Psoas muscle (tissue), 8 donors: ENCODE measurements at regions of chr14 and their contacts with region 1.

Region 1: GRCh38 chr14:32150392-32150791 is 51.5 kb upstream of the RNU6-7 start:
- DNase-seq: no peak
- ATAC-seq: no peak
- H3K4me3 ChIP-seq: no peak overlapping the region
- H3K27ac ChIP-seq: no peak overlapping the region
- H3K4me1 ChIP-seq: no peaks in the 10 kb centered on the region
- H3K27me3 ChIP-seq: no peaks in the 10 kb centered on the region
- CTCF ChIP-seq: no peak

Region 2: DNA sequence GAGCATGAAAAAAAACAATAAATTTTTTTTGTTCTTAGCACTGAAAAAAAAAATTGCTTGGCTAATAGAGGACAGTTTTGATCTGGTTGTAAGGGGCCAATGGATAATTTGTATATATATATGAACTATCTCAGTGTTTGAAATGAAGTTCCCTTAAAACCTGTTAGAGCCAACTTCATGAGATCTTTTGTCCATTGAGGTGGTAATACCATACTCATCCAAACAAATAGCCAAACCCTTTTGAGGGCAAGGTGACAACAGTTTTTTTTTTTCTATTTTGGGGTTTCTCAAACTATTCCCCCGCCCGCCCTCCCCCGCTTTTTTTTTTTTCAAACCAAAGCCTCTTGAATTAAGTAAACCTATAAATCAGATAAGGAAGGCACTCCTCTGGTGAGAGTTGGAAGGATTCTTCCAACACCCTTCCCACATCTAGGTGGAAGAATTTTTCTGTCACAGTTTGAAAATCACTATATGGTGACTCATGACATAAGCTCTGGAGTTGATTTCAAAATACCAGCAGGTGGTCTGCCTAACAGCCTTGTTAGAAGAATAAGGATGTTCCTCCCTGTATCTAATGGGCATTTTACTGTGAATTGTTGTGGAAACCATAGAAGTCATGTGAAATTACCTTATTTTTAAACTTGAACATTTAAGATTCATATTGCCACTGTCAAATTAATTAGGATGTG is 63.1 kb before region 1 on chr14:
- intact Hi-C with region 1: loop called in 1 of 2 experiments (anchors 10 kb)
- DNase-seq: no peak
- ATAC-seq: peak in 2 of 4 donors; percentile 65 to 69
- H3K4me3 ChIP-seq: no peak overlapping the region
- H3K27ac ChIP-seq: no peak overlapping the region
- H3K4me1 ChIP-seq: peaks cover 28% of the 10 kb centered on the region
- H3K27me3 ChIP-seq: no peaks in the 10 kb centered on the region
- CTCF ChIP-seq: no peak

Region 3: DNA sequence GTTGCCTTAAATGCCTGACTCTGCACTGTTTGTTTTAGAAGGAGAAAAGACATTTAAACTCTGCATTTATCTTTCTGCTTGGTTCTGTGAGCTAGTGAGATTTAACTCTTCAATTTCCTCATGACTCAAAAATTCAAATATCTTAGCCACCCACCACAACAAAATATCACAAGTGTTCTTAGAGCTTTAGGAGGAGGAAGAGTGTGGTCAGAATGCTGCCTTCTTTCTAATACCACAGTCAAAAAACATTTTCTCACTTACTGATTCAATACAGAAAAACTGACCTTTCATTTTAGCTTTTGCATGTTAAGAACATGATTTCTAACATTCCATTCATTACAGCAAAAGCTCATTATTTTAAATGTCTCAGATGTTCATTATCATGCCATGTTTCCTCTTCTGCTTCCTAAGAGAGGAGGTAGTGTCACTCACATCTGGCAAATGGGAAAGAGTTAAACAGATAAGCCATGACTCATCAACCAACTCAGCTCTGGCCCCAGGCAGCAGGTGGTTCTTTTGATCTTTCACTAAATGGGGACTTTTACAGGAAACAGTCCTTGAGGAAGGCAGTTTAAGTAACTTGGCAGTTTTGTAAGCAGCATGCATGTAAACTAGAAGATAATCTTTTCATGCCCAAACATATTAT is 109.1 kb after region 1 on chr14:
- intact Hi-C with region 1: no loop called
- DNase-seq: no peak
- ATAC-seq: peak in 2 of 4 donors; percentile 46 to 64
- H3K4me3 ChIP-seq: no peak overlapping the region
- H3K27ac ChIP-seq: no peak overlapping the region
- H3K4me1 ChIP-seq: peaks cover 9% of the 10 kb centered on the region
- H3K27me3 ChIP-seq: no peaks in the 10 kb centered on the region
- CTCF ChIP-seq: no peak

Region 4: DNA sequence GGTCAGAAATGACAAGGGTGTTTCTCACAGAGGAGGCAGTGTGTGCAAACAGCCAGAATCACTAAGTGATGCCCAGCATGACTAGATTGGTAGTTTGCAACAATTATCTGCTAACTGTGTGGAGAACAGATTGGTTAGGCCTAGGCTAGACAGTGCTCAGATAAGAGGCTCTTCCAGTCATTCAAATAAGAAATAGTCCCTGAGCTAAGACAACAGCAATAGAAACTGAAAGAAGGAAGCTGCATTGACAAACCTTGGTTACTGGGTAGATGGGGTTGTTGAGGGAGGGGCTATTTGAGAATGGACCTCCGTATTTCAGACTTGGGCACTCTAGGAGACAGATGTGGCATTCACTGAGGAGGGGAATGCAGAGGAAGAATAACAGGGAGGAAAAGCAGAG is 533.3 kb after region 1 on chr14:
- intact Hi-C with region 1: no loop called
- DNase-seq: no peak
- ATAC-seq: no peak
- H3K4me3 ChIP-seq: no peak overlapping the region
- H3K27ac ChIP-seq: no peak overlapping the region
- H3K4me1 ChIP-seq: peaks cover 3% of the 10 kb centered on the region
- H3K27me3 ChIP-seq: no peaks in the 10 kb centered on the region
- CTCF ChIP-seq: no peak